Activated CD8-positive, alpha-beta T cell treated with anti-CD3 and anti-CD28 coated beads, Interleukin-2, amount 10 ng/mL, durations not matched to agents 7 days and 5 days (primary cell): ENCODE measurements at regions of chr12 and their contacts with region 1.

Region 1: GRCh38 chr12:103884316-103884715 is 43.3 kb upstream of the NT5DC3 start:
- DNase-seq: peak; percentile 50
- ATAC-seq: no peak
- H3K4me3 Mint-ChIP-seq: no peak overlapping the region
- H3K27ac Mint-ChIP-seq: no peak overlapping the region
- H3K4me1 Mint-ChIP-seq: peaks cover 30% of the 10 kb centered on the region
- H3K27me3 Mint-ChIP-seq: no peaks in the 10 kb centered on the region

Region 2: GRCh38 chr12:103924761-103925641 is 40.7 kb after region 1 on chr12:
- CTCF ChIA-PET with region 1: interaction called, 26 read pairs
- POLR2A ChIA-PET with region 1: interaction called, 8 read pairs
- DNase-seq: peak; percentile 48
- ATAC-seq: no peak
- H3K4me3 Mint-ChIP-seq: no peak overlapping the region
- H3K27ac Mint-ChIP-seq: peak overlapping the region; percentile 23
- H3K4me1 Mint-ChIP-seq: peaks cover 29% of the 10 kb centered on the region
- H3K27me3 Mint-ChIP-seq: no peaks in the 10 kb centered on the region

Region 3: GRCh38 chr12:103956516-103957027 is 72.3 kb after region 1 on chr12:
- CTCF ChIA-PET with region 1: interaction called, 10 read pairs
- POLR2A ChIA-PET with region 1: interaction called, 6 read pairs
- DNase-seq: peak; percentile 28
- ATAC-seq: no peak
- H3K4me3 Mint-ChIP-seq: peak overlapping the region; percentile 98
- H3K27ac Mint-ChIP-seq: peak overlapping the region; percentile 98
- H3K4me1 Mint-ChIP-seq: peaks cover 41% of the 10 kb centered on the region
- H3K27me3 Mint-ChIP-seq: no peaks in the 10 kb centered on the region